GM18951 (cell line): ENCODE measurements at regions of chr16 and their contacts with region 1.

Region 1: GRCh38 chr16:76676356-76676755 is 399.2 kb downstream of the CNTNAP4 start:
- POLR2A ChIP-seq: no peak

Region 2: GRCh38 chr16:77062878-77063671 is 386.7 kb after region 1 on chr16:
- in situ Hi-C with region 1: loop called (anchors 25 kb)
- POLR2A ChIP-seq: no peak